IMR-90 (cell line): ENCODE measurements at regions of chr15 and their contacts with region 1.

Region 1: DNA sequence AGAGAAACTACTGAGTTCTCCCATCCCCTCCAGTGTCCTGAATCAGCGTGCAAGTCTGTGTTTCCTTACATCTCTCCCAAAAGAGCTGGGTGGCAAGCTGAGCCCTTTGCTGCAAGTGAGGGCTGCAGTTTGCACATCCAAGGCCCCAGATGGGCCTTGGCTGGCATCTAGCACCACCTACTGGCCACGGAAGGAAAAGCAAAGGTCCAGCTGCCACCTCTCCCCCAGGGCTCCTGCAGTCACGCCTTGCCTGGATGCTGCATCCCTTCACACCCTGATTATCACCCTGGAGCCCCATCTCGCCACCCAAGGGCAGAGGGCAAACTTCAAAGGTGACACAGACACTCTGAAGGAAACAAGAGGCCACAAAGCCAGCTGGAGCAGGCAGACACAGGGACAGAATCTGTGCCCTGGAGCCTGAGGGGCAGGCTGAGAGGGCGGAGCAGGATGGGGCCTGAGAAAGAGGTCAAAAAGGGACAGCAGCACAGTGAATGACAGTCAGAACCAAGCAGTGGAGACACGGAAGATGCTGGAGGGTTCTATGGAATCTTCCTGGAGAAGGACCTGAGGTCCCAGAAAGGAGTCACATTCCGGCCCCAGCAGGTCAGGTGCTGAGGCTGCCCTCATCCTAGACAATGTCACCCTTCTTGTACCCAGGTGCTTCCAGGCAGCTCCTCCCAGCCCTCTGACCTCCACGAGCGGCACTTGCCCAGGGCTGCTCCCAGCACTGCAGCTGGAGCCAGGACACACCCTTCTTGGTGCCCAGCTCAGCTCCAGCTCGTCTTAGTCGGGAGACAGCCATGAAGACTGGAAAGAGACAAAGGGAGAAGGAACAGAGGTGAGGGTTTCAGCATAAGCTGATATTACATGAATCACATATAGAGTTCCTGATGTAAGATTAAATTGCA is 18.3 kb upstream of the NTRK3 start:
- DNase-seq: peak; percentile 50
- ATAC-seq: peak; percentile 96
- H3K4me3 ChIP-seq: no peak overlapping the region
- H3K27ac ChIP-seq: no peak overlapping the region
- H3K4me1 ChIP-seq: no peaks in the 10 kb centered on the region
- H3K27me3 ChIP-seq: no peaks in the 10 kb centered on the region; the same call in 1 of the 2 replicates
- CTCF ChIP-seq: peak; percentile 86
- POLR2A ChIP-seq: no peak
- RAD21 ChIP-seq: peak; percentile 94

Region 2: DNA sequence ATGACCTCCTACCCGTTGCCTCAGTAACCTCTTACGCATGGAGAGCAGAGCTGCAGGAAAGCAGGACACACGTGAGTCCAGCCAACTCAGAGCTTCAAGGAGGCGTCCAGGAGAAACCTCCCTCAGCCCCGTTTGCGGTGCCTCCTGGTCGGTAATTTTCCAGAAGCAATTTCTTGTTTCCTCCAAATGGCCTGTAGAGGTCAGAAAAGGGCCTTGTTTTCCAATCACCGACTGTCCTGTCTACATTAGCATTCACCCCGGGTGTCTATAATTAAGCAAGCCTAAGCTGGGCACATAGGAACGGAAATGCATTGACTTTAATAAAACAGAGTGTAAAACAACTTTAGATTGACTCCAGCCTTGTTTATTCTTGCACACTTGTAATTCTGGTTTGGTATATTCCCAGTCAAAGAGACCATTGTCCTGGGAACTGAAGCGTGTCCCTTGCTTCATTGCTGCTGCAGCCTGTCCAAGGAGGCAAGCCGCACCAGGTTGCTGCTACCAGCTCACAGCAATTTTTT is 1358.9 kb before region 1 on chr15:
- CTCF ChIA-PET with region 1: no interaction called
- POLR2A ChIA-PET with region 1: no interaction called
- dilution Hi-C with region 1: no loop called
- in situ Hi-C with region 1: no loop called
- intact Hi-C with region 1: loop called (anchors 10 kb)
- DNase-seq: peak; percentile 13
- ATAC-seq: peak; percentile 48; the same call in 1 of the 2 replicates
- H3K4me3 ChIP-seq: no peak overlapping the region
- H3K27ac ChIP-seq: no peak overlapping the region
- H3K4me1 ChIP-seq: no peaks in the 10 kb centered on the region
- H3K27me3 ChIP-seq: no peaks in the 10 kb centered on the region
- CTCF ChIP-seq: peak; percentile 46
- POLR2A ChIP-seq: no peak
- RAD21 ChIP-seq: peak; percentile 62

Region 3: GRCh38 chr15:88450109-88450798 is 175.4 kb after region 1 on chr15:
- CTCF ChIA-PET with region 1: no interaction called
- POLR2A ChIA-PET with region 1: no interaction called
- dilution Hi-C with region 1: no loop called
- in situ Hi-C with region 1: no loop called
- intact Hi-C with region 1: loop called (anchors 1 kb)
- DNase-seq: peak; percentile 66
- ATAC-seq: peak; percentile 71
- H3K4me3 ChIP-seq: no peak overlapping the region
- H3K27ac ChIP-seq: no peak overlapping the region
- H3K4me1 ChIP-seq: peaks cover 1% of the 10 kb centered on the region; the same call in 1 of the 2 replicates
- H3K27me3 ChIP-seq: peaks cover 8% of the 10 kb centered on the region
- CTCF ChIP-seq: peak; percentile 77
- POLR2A ChIP-seq: no peak
- RAD21 ChIP-seq: peak; percentile 84